ENCODE measurements at regions of chr2 and their contacts with region 1.

Region 1: DNA sequence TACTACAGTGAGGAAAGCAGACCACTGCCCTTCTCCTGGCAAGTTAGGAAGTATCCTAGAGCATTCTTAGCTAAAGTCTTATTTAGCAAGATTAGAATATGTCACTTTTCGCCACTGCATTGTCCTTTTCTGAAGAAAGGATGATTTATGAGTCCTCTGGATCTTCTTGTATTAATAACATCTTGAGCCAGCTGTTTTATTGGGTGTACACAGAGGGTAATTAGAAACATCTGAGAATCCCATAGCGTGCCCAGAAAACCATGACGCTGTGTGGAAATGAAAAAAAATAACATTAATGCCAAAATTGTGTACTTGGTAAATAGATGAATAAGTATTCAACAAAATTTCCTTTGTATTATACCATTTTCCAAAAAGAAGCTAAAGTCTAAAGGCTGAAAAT is 198.7 kb downstream of the LTBP1 start:
- DNase-seq: no peak
- ATAC-seq: peak in 2 of 4 donors; percentile 62 to 73
- H3K4me3 ChIP-seq: no peak overlapping the region
- H3K27ac ChIP-seq: peak overlapping the region in 9 of 12 donors; percentile 10 to 68 (median 30)
- H3K4me1 ChIP-seq: peaks cover 0 to 66% (median 24%) of the 10 kb centered on the region in 12 donors
- H3K27me3 ChIP-seq: no peaks in the 10 kb centered on the region
- CTCF ChIP-seq: no peak
- POLR2A ChIP-seq: no peak

Region 2: GRCh38 chr2:32926708-32927084 is 218.8 kb before region 1 on chr2:
- intact Hi-C with region 1: no loop called
- DNase-seq: peak in 1 of 5 donors; percentile 25
- ATAC-seq: peak in 2 of 4 donors; percentile 61 to 77
- H3K4me3 ChIP-seq: no peak overlapping the region
- H3K27ac ChIP-seq: no peak overlapping the region
- H3K4me1 ChIP-seq: peaks cover 0 to 4% (median 0%) of the 10 kb centered on the region in 12 donors
- H3K27me3 ChIP-seq: no peaks in the 10 kb centered on the region
- CTCF ChIP-seq: no peak
- POLR2A ChIP-seq: no peak

Region 3: DNA sequence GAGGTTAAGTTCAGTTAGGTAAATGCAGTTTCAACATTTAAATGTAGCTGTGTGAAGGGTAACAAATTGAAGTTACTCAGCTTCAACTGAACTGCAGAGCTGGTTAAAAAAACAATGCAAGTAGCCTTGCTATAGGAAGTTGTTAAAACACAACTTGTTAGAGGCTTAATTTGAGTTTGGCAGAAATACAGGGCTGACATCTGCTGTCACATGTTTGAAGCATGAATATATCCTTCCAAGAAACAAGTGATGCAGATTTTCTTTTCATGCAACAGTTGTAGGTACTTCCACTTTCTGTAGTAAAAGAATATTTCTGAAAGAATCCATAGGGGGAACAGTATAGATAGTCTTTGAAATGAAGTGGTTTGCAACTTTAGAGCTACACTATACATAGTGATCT is 122.3 kb after region 1 on chr2:
- intact Hi-C with region 1: loop called in 1 of 10 experiments (anchors 10 kb)
- DNase-seq: no peak
- ATAC-seq: no peak
- H3K4me3 ChIP-seq: no peak overlapping the region
- H3K27ac ChIP-seq: peak overlapping the region in 1 of 12 donors; percentile 48
- H3K4me1 ChIP-seq: peaks cover 0 to 24% (median 9%) of the 10 kb centered on the region in 12 donors
- H3K27me3 ChIP-seq: no peaks in the 10 kb centered on the region
- CTCF ChIP-seq: no peak
- POLR2A ChIP-seq: no peak

Region 4: GRCh38 chr2:33275689-33276444 is 130.4 kb after region 1 on chr2:
- intact Hi-C with region 1: loop called in 1 of 10 experiments (anchors 5 kb)
- DNase-seq: peak in 4 of 5 donors; percentile 29 to 66 (median 44)
- ATAC-seq: peak; percentile 40 to 80 (median 71)
- H3K4me3 ChIP-seq: no peak overlapping the region
- H3K27ac ChIP-seq: peak overlapping the region in 7 of 12 donors; percentile 9 to 89 (median 55)
- H3K4me1 ChIP-seq: peaks cover 0 to 21% (median 0%) of the 10 kb centered on the region in 12 donors
- H3K27me3 ChIP-seq: no peaks in the 10 kb centered on the region
- CTCF ChIP-seq: no peak
- POLR2A ChIP-seq: no peak

Region 5: DNA sequence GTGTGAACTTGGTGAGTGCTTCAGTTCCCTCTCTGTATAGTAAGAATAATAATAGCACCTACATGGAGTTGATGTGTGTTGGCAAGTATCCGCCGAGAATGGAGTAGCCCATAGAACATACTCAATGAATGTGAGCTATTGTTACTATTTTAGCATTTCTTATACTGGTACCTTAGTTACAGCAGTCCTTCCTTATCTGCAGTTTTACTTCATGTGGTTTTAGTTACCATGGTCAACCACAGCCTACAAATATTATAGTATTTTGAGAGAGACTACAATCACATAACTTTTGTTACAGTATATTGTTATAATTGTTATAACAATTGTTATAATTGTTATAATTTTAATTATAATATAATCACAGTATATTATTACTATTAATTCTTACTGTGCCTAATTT is 178.5 kb after region 1 on chr2:
- intact Hi-C with region 1: no loop called
- DNase-seq: no peak
- ATAC-seq: peak in 1 of 4 donors; percentile 9
- H3K4me3 ChIP-seq: no peak overlapping the region
- H3K27ac ChIP-seq: no peak overlapping the region
- H3K4me1 ChIP-seq: peaks cover 0 to 31% (median 24%) of the 10 kb centered on the region in 12 donors
- H3K27me3 ChIP-seq: no peaks in the 10 kb centered on the region
- CTCF ChIP-seq: no peak
- POLR2A ChIP-seq: no peak